Common myeloid progenitor, CD34-positive (primary cell): ENCODE measurements at regions of chr1 and their contacts with region 1.

Region 1: GRCh38 chr1:84724128-84724860 is 34.0 kb upstream of the SSX2IP start:
- DNase-seq: peak; percentile 36 to 52 (median 47)
- H3K4me3 ChIP-seq: no peak overlapping the region
- H3K27ac ChIP-seq: no peak overlapping the region
- H3K4me1 ChIP-seq: no peaks in the 10 kb centered on the region
- H3K27me3 ChIP-seq: no peaks in the 10 kb centered on the region

Region 2: DNA sequence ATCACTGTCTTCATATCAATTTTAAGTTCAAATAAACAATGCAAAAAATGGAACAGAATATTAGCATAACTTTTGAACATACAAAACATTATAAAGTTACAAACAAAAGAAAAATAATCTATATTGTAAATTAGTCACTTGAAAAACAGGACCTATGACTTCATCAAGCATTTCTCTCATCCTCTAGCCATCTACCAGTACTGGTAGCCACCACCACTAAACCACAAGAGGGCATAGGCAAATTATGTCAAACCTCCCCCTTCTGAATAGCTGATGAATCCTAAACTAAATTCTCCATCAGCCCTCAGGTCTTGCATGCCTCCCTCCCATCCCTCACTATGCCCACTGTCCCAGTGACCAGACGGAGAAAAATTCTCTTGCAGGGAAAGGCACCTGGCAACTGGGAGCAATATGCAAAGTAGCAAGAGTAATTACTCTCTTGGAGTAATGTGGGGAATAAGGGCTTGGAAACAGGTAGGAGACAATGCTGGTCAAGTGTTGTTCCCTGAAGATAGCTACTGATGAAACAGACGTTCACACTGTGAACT is 71.1 kb before region 1 on chr1:
- CTCF ChIA-PET with region 1: no interaction called
- POLR2A ChIA-PET with region 1: no interaction called
- DNase-seq: peak in 2 of 3 donors; percentile 7 to 21
- H3K4me3 ChIP-seq: no peak overlapping the region
- H3K27ac ChIP-seq: no peak overlapping the region
- H3K4me1 ChIP-seq: no peaks in the 10 kb centered on the region
- H3K27me3 ChIP-seq: no peaks in the 10 kb centered on the region

Region 3: DNA sequence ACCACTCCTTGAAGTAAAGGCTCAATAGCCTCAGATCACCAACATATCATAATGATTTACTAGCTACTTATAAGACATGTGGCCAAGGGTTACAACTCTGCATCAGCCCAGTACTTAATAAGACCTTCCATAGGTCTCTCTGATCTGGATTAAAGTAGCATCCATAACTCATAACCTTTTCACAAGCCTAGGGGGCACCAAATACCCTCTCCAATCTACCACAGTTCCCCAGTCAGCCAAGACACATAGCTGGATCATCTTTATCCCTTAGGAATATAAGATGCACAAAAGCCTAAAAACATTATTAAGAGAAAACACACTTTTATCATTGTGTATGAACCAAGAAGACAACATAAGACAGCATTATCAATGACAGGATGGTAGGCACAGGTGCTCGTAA is 56.1 kb before region 1 on chr1:
- CTCF ChIA-PET with region 1: interaction called, 17 read pairs
- POLR2A ChIA-PET with region 1: no interaction called
- DNase-seq: peak; percentile 31 to 55 (median 42)
- H3K4me3 ChIP-seq: no peak overlapping the region
- H3K27ac ChIP-seq: no peak overlapping the region
- H3K4me1 ChIP-seq: peaks cover 0 to 3% (median 0%) of the 10 kb centered on the region in 4 experiments
- H3K27me3 ChIP-seq: no peaks in the 10 kb centered on the region

Region 4: DNA sequence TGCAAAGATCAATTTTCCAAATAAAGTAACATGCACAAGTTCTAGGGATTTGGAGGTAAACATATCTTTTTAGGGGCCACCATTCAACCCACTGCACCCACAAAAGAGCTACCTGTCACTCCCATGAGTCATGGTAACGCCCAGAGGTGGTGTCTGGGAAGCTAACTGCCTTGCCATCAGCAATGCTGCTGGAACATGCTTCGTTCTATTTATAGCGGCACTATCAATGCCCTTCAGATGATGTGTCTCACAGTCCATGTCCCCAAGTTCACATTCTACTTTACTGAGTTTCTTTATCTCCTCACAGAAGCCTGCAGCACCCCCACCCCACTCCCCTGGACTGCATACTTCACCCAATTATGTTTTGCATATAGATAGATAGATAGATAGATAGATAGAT is 73.3 kb after region 1 on chr1:
- CTCF ChIA-PET with region 1: no interaction called
- POLR2A ChIA-PET with region 1: no interaction called
- DNase-seq: no peak
- H3K4me3 ChIP-seq: no peak overlapping the region
- H3K27ac ChIP-seq: no peak overlapping the region
- H3K4me1 ChIP-seq: peaks cover 0 to 11% (median 4%) of the 10 kb centered on the region in 4 experiments
- H3K27me3 ChIP-seq: no peaks in the 10 kb centered on the region